H1 (cell line): ENCODE measurements at regions of chr2 and their contacts with region 1.

Region 1: DNA sequence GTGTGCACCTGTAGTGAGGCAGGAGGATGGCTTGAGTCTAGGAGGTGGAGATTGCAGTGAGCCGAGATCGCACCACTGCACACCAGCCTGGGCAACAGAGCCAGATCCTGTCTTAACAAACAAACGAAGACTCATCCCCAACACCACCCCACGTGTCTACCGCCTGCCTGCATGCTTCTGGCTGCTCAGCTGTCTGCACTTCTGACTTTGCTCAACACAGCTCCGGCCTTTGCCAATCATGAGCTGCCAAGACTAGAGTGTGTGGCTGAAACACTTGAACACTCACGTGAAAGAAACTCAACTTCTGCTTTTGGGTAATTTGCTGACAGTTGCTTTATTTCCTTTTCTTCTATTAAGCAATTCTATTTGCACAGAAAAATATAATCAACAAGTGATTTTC is 32.1 kb upstream of the SP3 start:
- DNase-seq: no peak
- H3K4me3 ChIP-seq: no peak overlapping the region
- H3K27ac ChIP-seq: no peak overlapping the region
- H3K4me1 ChIP-seq: no peaks in the 10 kb centered on the region
- H3K27me3 ChIP-seq: no peaks in the 10 kb centered on the region; a peak in 1 of 7 replicates
- CTCF ChIP-seq: no peak
- EP300 ChIP-seq: no peak
- POLR2A ChIP-seq: no peak
- RAD21 ChIP-seq: no peak

Region 2: GRCh38 chr2:173986805-173987204 is 10.5 kb before region 1 on chr2:
- CTCF ChIA-PET with region 1: interaction called, 12 read pairs
- POLR2A ChIA-PET with region 1: interaction called, 3 read pairs
- DNase-seq: no peak
- H3K4me3 ChIP-seq: no peak overlapping the region
- H3K27ac ChIP-seq: no peak overlapping the region
- H3K4me1 ChIP-seq: no peaks in the 10 kb centered on the region; a peak in 1 of 7 replicates
- H3K27me3 ChIP-seq: no peaks in the 10 kb centered on the region; a peak in 1 of 7 replicates
- CTCF ChIP-seq: no peak
- EP300 ChIP-seq: no peak
- POLR2A ChIP-seq: no peak
- RAD21 ChIP-seq: no peak

Region 3: DNA sequence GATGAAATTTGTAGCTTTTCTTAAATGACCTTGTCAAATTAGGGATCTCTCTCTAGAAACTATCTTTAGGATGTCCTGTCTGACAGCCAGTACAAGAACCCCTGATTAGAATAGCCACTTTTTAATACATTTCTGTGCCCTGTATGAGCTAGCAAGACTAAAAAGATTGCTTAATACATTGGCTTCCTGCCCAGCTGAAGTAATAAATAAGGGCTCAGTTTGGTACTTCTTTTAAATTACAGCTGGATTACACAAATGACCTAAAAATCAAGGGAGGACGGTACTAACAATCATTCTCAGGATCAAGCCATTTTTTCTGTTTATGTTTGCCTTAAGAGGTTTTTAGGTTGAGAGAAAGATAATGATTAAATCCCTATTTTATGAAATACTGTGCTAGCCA is 262.7 kb after region 1 on chr2:
- CTCF ChIA-PET with region 1: no interaction called
- POLR2A ChIA-PET with region 1: no interaction called
- DNase-seq: no peak
- H3K4me3 ChIP-seq: no peak overlapping the region
- H3K27ac ChIP-seq: no peak overlapping the region
- H3K4me1 ChIP-seq: no peaks in the 10 kb centered on the region
- H3K27me3 ChIP-seq: no peaks in the 10 kb centered on the region
- CTCF ChIP-seq: no peak
- EP300 ChIP-seq: no peak
- POLR2A ChIP-seq: no peak
- RAD21 ChIP-seq: no peak